Aorta (tissue), 5 donors: ENCODE measurements at regions of chr10 and their contacts with region 1.

Region 1: GRCh38 chr10:101095542-101096213 is 33.9 kb downstream of the KAZALD1 start:
- DNase-seq: peak; percentile 73 to 83
- ATAC-seq: peak; percentile 60
- H3K4me3 ChIP-seq: no peak overlapping the region
- H3K27ac ChIP-seq: no peak overlapping the region
- H3K4me1 ChIP-seq: no peaks in the 10 kb centered on the region
- H3K27me3 ChIP-seq: no peaks in the 10 kb centered on the region

Region 2: DNA sequence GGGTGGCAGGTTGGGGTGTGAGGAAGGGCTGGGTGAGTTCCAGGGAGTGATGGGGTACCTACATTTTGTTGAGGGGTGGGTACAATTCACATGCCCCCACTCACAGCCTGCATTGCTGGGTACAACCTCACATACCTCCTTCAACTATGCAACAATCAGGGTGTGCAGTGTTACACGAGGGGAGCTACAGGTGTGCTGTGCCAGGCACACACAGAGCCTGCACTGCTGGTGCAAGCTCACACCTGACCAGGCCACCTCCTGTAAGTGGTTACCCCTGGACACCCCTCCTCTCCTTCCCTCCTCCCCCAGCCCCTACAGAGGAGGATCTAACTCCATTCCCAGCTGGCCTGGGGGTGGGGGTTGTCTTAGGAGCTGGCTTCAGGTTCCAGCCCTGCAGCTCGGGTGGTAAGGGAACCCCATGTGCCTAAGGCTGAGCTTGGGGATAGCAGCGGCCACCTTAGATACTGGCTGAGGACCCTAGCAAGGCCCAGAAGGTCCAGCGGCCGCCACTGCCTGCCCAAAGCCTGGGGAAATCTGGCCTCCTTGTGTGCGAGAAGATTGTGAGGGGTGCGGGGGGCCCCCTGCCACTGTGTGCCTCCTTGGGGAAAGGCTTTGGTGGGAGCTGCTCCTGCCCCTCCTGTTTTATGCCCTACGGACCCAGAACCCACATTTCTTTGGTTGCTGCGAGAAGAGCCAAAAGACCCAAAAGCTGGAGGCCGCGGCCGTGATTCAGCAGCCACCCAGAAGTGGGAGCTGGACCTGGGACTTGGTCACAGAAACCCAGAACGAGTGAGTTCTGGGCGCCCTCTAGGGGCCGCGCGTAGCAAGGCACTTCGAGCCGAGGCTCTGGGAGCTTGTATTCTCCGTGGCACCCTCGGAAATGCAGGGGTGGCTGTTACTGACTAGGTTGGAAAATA is 46.2 kb after region 1 on chr10:
- intact Hi-C with region 1: loop called (anchors 1 to 2 kb)
- DNase-seq: peak; percentile 86 to 94
- ATAC-seq: peak; percentile 88
- H3K4me3 ChIP-seq: no peak overlapping the region
- H3K27ac ChIP-seq: no peak overlapping the region
- H3K4me1 ChIP-seq: no peaks in the 10 kb centered on the region
- H3K27me3 ChIP-seq: no peaks in the 10 kb centered on the region

Region 3: DNA sequence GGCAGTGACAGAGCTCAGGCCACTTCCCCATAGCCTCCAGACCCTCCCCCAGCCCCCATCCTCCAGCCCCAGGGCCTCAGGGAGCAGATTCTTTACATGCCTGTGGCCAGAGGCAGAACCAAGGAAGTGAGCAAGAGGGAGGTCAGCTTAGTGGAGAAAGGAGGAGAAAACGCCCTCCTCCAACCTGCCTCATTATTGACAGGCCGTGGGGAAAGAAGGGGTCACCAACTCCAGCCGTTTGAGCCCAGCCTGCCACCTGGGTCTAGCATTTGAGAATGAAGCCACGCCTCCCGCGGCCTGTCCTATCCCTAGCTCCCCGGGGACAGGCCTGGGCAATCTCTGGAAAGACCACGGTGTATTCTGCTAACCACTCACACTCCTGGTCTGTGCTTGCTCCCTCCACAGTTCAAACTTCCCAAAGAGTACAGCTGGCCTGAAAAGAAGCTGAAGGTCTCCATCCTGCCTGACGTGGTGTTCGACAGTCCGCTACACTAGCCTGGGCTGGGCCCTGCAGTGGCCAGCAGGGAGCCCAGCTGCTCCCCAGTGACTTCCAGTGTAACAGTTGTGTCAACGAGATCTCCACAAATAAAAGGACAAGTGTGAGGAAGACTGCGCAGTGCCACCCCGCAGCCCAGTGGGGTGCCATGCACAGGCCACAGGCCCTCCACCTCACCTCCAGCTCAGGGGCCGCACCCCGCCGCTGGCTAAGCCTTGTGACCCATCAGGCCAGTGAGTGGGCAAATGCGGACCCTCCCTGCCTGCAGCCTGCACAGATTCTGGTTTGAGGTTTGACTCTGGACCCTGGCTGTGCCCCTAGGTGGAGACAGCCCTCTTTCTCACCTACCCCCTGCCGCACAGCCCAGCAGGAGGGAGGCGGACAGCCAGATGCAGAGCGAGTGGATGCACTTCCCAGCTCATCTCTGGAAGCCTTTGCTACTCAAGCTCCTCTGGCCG is 1534.3 kb after region 1 on chr10:
- intact Hi-C with region 1: no loop called
- DNase-seq: peak in 1 of 2 donors; percentile 73
- ATAC-seq: no peak
- H3K4me3 ChIP-seq: no peak overlapping the region
- H3K27ac ChIP-seq: no peak overlapping the region
- H3K4me1 ChIP-seq: peaks cover 4 to 7% of the 10 kb centered on the region in 2 donors
- H3K27me3 ChIP-seq: no peaks in the 10 kb centered on the region